ENCODE measurements at regions of chr2 and their contacts with region 1.

Region 1: DNA sequence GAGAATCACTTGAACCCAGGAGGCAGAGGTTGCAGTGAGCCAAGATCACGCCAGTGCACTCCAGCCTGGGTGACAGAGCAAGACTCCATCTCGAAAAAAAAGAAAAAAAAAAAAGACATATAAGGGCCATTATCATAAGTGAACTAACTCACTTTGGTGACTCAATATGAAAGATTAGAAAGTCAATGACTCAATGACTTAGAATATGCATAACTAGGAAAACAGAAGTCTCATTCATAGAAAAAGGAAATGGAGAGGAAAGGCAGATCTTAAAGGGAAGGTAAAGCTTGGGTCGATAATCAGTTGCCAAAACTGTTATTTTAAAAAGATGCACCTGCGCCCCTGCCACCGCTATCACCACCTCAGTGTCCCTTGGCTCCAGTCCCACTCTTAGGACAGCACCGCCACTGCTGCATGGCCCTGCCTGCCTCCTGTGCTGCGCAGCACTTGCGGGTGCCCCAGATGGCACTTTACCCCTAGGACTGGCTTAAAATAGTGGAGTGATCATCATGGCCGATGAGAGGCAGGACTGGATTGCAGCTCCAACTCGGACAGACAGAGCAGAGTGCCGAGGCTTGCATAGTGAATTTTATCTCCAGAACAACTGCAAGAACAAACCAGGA is 54.7 kb downstream of the INO80D start:
- DNase-seq: no peak
- H3K4me3 Mint-ChIP-seq: no peak overlapping the region
- H3K27ac Mint-ChIP-seq: no peak overlapping the region
- H3K4me1 Mint-ChIP-seq: peaks cover 61% of the 10 kb centered on the region
- H3K27me3 Mint-ChIP-seq: no peaks in the 10 kb centered on the region

Region 2: DNA sequence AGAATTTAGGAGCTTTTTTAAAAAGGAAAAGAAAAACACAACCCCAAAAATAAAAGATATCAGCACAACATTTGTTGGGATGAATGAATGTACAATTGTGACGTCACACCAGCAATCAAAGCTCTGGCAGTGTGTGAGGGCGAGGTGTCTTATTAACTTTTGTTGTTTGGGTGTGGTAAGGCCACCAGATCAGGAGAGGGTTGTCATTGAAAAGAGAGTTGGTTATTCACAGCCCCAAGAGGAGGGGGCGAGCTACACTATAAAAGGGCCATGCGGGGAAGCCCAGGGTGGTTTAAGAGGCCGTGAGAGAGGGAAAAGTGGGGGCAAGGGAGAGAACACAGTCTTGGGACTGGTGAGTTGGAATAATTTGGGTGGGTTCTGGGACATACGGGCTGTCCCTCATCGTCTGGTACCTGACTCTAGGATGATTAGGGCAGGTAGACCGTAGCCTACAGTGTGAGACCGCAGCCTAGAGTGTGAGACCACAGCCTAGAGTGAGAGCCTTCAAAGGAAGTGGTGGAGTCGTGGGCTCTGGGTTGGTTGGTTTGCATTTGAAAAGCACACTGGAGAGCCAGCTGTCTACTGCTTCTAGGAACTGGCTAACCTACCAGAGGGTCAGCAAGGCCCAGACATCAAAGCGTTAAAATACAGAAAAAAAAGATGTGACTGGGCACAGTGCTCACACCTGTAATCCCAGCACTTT is 73.7 kb before region 1 on chr2:
- CTCF ChIA-PET with region 1: no interaction called
- POLR2A ChIA-PET with region 1: no interaction called
- intact Hi-C with region 1: no loop called
- DNase-seq: no peak
- H3K4me3 Mint-ChIP-seq: no peak overlapping the region
- H3K27ac Mint-ChIP-seq: no peak overlapping the region
- H3K4me1 Mint-ChIP-seq: no peaks in the 10 kb centered on the region
- H3K27me3 Mint-ChIP-seq: peaks cover 5% of the 10 kb centered on the region

Region 3: GRCh38 chr2:206085742-206086445 is 54.6 kb after region 1 on chr2 and contains the start of gene INO80D:
- CTCF ChIA-PET with region 1: no interaction called
- POLR2A ChIA-PET with region 1: interaction called, 10 read pairs
- intact Hi-C with region 1: loop called (anchors 1 kb)
- DNase-seq: peak; percentile 87
- H3K4me3 Mint-ChIP-seq: peak within 1 kb of the TSS; percentile 99
- H3K27ac Mint-ChIP-seq: peak within 1 kb of the TSS; percentile 100
- H3K4me1 Mint-ChIP-seq: peaks cover 14% of the 10 kb centered on the region
- H3K27me3 Mint-ChIP-seq: no peaks in the 10 kb centered on the region
- total RNA-seq, gene INO80D: 14.5 to 15.3 TPM

Region 4: GRCh38 chr2:206274434-206275268 is 243.4 kb after region 1 on chr2 and contains the start of gene ZDBF2:
- CTCF ChIA-PET with region 1: no interaction called
- POLR2A ChIA-PET with region 1: no interaction called
- intact Hi-C with region 1: loop called (anchors 10 kb)
- DNase-seq: peak; percentile 60
- H3K4me3 Mint-ChIP-seq: peak within 1 kb of the TSS; percentile 80
- H3K27ac Mint-ChIP-seq: peak within 1 kb of the TSS; percentile 73
- H3K4me1 Mint-ChIP-seq: peaks cover 21% of the 10 kb centered on the region
- H3K27me3 Mint-ChIP-seq: peaks cover 42% of the 10 kb centered on the region
- total RNA-seq, gene ZDBF2: 7.4 to 7.8 TPM

Measured in activated CD4-positive, alpha-beta memory T cell treated with anti-CD3 and anti-CD28 coated beads for 36 hours (primary cell).